ENCODE measurements at regions of chr1 and their contacts with region 1.

Region 1: DNA sequence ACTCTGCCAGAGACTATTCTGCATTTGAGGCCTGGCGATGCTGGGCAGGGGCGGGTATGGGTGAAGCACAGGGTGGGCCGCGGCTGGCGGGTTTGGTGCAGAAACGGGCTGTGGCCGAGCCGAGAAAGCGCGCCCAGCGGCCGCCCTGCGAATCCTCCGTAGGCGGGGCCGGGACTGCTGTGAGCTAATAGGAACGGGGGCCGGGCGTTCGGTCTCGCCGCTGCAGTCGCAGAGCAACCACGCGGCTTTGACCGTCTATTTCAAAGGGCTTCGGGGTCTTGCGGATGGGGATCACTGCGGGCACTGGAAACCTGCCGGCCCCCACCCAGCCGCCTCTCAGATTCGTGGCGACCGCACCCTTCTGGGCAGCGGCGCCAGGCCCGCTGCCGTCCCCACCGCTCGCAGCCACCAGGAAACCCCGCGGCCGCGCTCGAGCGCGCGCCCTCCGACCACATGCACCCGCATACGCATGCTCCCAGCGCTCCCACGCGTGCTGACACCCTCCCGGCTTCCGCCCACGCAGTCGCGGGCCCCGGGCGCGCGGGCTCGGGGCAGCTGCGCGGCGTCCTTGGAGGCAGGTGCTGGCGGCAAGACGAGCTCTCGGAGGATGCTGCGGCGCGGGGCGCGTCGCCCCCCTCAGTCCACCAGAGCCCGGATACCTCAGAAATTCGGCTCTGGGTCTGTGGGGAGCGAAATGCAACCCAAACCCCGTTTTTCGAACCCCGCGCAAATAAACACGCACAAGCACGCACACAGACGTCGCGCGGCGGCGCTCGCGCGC is 32.6 kb downstream of the DNTTIP2 start:
- DNase-seq: peak; percentile 88 to 97 (median 92)
- ATAC-seq: peak; percentile 74
- H3K4me3 ChIP-seq: peak overlapping the region; percentile 72 to 87
- H3K27ac ChIP-seq: peak overlapping the region; percentile 95
- H3K4me1 ChIP-seq: peaks cover 11 to 44% of the 10 kb centered on the region in 2 donors
- H3K27me3 ChIP-seq: no peaks in the 10 kb centered on the region
- CTCF ChIP-seq: peak; percentile 26 to 48

Region 2: GRCh38 chr1:93304716-93305138 is 541.7 kb before region 1 on chr1:
- intact Hi-C with region 1: loop called in 1 of 2 experiments (anchors 5 kb)
- DNase-seq: peak in 2 of 4 donors; percentile 42 to 72
- ATAC-seq: peak; percentile 93
- H3K4me3 ChIP-seq: no peak overlapping the region
- H3K27ac ChIP-seq: no peak overlapping the region
- H3K4me1 ChIP-seq: no peaks in the 10 kb centered on the region
- H3K27me3 ChIP-seq: no peaks in the 10 kb centered on the region
- CTCF ChIP-seq: peak; percentile 86 to 88

Region 3: GRCh38 chr1:93437976-93438605 is 408.3 kb before region 1 on chr1:
- intact Hi-C with region 1: loop called in 1 of 2 experiments (anchors 10 kb)
- DNase-seq: peak in 2 of 4 donors; percentile 33 to 55
- ATAC-seq: peak; percentile 54
- H3K4me3 ChIP-seq: no peak overlapping the region
- H3K27ac ChIP-seq: no peak overlapping the region
- H3K4me1 ChIP-seq: no peaks in the 10 kb centered on the region
- H3K27me3 ChIP-seq: no peaks in the 10 kb centered on the region
- CTCF ChIP-seq: peak; percentile 45 to 66

Region 4: GRCh38 chr1:93715529-93716126 is 130.8 kb before region 1 on chr1:
- intact Hi-C with region 1: no loop called
- DNase-seq: no peak
- ATAC-seq: no peak
- H3K4me3 ChIP-seq: no peak overlapping the region
- H3K27ac ChIP-seq: no peak overlapping the region
- H3K4me1 ChIP-seq: no peaks in the 10 kb centered on the region
- H3K27me3 ChIP-seq: no peaks in the 10 kb centered on the region
- CTCF ChIP-seq: no peak